Right lobe of liver (tissue), 6 donors: ENCODE measurements at regions of chr15 and their contacts with region 1.

Region 1: GRCh38 chr15:65323071-65323511 is 18.6 kb downstream of the RNU5B-1 start:
- DNase-seq: peak in 1 of 3 donors; percentile 56
- ATAC-seq: peak in 3 of 4 donors; percentile 26 to 57 (median 33)
- H3K4me3 ChIP-seq: no peak overlapping the region
- H3K27ac ChIP-seq: no peak overlapping the region
- H3K4me1 ChIP-seq: no peaks in the 10 kb centered on the region
- H3K27me3 ChIP-seq: no peaks in the 10 kb centered on the region
- CTCF ChIP-seq: no peak
- POLR2A ChIP-seq: no peak

Region 2: DNA sequence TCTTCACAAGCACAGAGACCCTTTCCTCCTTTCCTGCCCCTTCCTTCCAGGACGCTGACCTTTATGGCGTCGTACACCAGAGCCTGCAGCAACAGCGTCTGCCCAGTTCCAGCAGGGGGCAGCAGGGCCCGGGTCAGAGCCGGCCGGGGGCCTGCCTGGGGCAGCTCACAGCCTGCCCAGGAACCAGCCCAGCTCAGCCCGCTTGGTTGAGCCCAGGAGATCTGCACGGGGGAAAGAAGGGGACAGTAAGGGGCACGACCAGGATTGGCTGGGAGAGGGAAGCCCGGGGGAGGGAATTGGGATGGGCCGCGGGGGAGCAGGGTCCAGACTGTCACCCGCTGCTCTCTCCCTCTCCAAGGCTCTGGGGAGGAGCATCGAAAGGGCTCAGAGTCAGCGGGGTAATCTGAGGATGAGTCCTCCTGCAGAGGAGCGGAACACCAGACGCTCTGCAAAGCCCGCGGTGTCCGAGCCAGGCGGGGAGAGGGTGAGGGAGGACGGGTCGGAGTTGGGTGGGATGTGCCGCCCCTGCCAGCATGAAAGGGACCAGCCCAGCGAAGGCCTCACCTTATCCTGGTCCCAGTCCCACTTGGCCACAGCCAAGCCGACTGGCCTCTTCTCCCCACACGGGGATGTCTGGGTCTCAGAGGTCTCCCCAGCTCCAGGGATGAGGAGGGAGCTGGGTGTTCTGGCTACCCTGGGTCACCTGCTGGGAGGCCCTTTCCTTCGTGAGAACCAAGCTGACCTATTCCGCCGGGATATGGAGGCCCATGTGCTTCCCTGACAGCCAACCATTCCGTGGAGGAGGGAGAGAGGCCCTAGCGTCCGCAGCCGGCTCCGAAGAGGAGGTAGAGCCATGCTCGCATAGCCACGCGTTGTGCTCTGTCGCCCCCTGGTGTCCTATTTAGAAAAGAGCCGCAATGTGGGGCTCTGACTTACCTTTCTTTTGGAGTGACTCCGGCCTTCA is 62.1 kb after region 1 on chr15:
- intact Hi-C with region 1: loop called (anchors 5 kb)
- DNase-seq: peak; percentile 84 to 85 (median 85)
- ATAC-seq: peak; percentile 93 to 98 (median 96)
- H3K4me3 ChIP-seq: peak overlapping the region; percentile 12 to 38 (median 13)
- H3K27ac ChIP-seq: no peak overlapping the region
- H3K4me1 ChIP-seq: peaks cover 0 to 2% (median 0%) of the 10 kb centered on the region in 4 donors
- H3K27me3 ChIP-seq: no peaks in the 10 kb centered on the region
- CTCF ChIP-seq: peak; percentile 81 to 84 (median 82)
- POLR2A ChIP-seq: no peak

Region 3: DNA sequence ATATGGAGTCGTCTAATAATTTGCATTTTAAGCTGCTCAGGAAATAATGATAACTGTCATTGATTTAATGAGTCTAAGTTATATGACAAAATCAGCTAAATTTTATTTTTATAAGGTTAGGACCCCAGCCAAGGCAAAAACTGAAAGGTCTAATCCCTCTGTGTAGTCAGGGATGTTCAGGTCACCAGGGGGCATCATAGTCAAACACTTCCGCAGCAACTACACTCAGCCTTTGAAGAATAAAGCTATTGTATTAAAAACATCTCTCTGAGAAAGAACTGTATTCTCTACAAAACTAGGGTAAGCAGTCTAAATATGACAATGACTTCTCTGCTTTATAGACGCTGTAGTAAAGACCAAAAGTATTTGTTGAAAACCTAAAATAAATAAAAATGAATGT is 272.9 kb after region 1 on chr15:
- intact Hi-C with region 1: no loop called
- DNase-seq: no peak
- ATAC-seq: peak in 1 of 4 donors; percentile 34
- H3K4me3 ChIP-seq: no peak overlapping the region
- H3K27ac ChIP-seq: no peak overlapping the region
- H3K4me1 ChIP-seq: no peaks in the 10 kb centered on the region
- H3K27me3 ChIP-seq: no peaks in the 10 kb centered on the region
- CTCF ChIP-seq: peak in 3 of 4 donors; percentile 11 to 27 (median 18)
- POLR2A ChIP-seq: no peak